Esophagus muscularis mucosa (tissue), 4 donors: ENCODE measurements at regions of chr16 and their contacts with region 1.

Region 1: DNA sequence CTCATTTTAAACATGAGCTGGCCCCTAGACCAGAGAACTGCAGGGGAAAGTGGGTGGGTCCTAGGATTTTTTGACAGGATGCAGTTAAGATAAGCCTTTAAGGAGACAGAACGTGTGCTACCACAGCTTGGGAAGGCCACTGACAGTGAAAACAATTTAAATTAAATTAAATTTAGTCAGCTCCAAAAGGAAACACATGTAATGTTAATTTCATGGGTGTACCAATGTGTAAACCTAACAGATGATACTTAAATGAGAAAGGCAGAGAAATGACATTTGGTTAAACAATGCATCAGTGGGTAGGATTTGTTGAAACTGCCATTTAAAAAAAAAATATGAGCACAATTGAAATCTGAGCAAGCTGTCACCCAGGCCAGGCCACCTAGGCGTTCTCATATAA is 250.8 kb downstream of the XYLT1 start:
- DNase-seq: no peak
- H3K4me3 ChIP-seq: no peak overlapping the region
- H3K27ac ChIP-seq: peak overlapping the region in 3 of 4 donors; percentile 9 to 73 (median 30)
- H3K4me1 ChIP-seq: peaks cover 13 to 57% (median 43%) of the 10 kb centered on the region in 4 donors
- H3K27me3 ChIP-seq: no peaks in the 10 kb centered on the region
- CTCF ChIP-seq: no peak
- EP300 ChIP-seq: no peak
- POLR2A ChIP-seq: no peak

Region 2: DNA sequence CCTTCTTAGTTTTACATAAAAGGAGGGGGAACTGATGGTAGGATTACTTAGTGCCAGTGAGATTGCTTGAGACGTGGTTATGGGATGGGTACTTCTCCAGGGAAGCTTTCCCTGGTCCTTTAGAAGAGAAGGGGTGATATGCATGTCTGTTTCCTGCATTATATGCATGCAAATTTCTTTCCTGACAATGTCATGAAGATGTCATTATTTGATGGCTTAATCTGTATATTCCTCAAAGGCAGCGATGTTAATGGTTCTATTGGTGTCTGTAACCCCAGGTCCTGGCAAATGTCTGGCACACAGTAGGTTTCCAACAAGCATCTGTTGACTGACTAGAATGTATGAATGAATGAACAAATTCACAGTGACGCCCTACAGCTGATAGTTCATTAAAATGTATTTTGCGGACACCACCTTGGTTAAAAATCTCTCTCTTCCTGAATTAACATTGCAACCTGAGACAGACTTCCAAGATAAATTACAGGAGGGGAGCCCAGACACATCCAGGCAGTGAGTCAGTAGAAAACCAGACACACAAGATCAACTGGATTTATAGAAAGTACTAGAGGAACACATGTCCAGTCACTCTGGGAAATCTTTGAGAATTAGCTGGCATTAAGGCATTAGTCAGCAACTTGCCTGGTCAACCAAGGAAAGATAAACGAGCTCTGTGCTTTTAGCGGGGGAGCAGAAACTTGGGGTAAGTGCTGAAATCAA is 42.6 kb before region 1 on chr16:
- intact Hi-C with region 1: no loop called
- DNase-seq: no peak
- H3K4me3 ChIP-seq: no peak overlapping the region
- H3K27ac ChIP-seq: no peak overlapping the region
- H3K4me1 ChIP-seq: peaks cover 0 to 8% (median 3%) of the 10 kb centered on the region in 4 donors
- H3K27me3 ChIP-seq: no peaks in the 10 kb centered on the region
- CTCF ChIP-seq: no peak
- EP300 ChIP-seq: no peak
- POLR2A ChIP-seq: no peak

Region 3: GRCh38 chr16:17289674-17290635 is 70.0 kb after region 1 on chr16:
- intact Hi-C with region 1: loop called (anchors 5 kb)
- DNase-seq: no peak
- H3K4me3 ChIP-seq: no peak overlapping the region
- H3K27ac ChIP-seq: peak overlapping the region in 3 of 4 donors; percentile 0 to 17 (median 17)
- H3K4me1 ChIP-seq: peaks cover 4 to 42% (median 28%) of the 10 kb centered on the region in 4 donors
- H3K27me3 ChIP-seq: no peaks in the 10 kb centered on the region
- CTCF ChIP-seq: no peak
- EP300 ChIP-seq: no peak
- POLR2A ChIP-seq: no peak

Region 4: GRCh38 chr16:17423221-17423620 is 203.2 kb after region 1 on chr16:
- intact Hi-C with region 1: loop called (anchors 5 kb)
- DNase-seq: no peak
- H3K4me3 ChIP-seq: no peak overlapping the region
- H3K27ac ChIP-seq: no peak overlapping the region
- H3K4me1 ChIP-seq: no peaks in the 10 kb centered on the region
- H3K27me3 ChIP-seq: no peaks in the 10 kb centered on the region
- CTCF ChIP-seq: no peak
- EP300 ChIP-seq: no peak
- POLR2A ChIP-seq: no peak